Activated naive CD4-positive, alpha-beta T cell treated with anti-CD3 and anti-CD28 coated beads for 36 hours (primary cell): ENCODE measurements at regions of chr15 and their contacts with region 1.

Region 1: GRCh38 chr15:31488426-31489204 is 162.0 kb downstream of the KLF13 start:
- DNase-seq: peak; percentile 57
- H3K4me3 Mint-ChIP-seq: no peak overlapping the region
- H3K27ac Mint-ChIP-seq: no peak overlapping the region
- H3K4me1 Mint-ChIP-seq: peaks cover 23% of the 10 kb centered on the region
- H3K27me3 Mint-ChIP-seq: no peaks in the 10 kb centered on the region

Region 2: GRCh38 chr15:31200735-31201151 is 287.9 kb before region 1 on chr15:
- CTCF ChIA-PET with region 1: interaction called, 37 read pairs
- intact Hi-C with region 1: loop called (anchors 1 kb)
- DNase-seq: peak; percentile 88
- H3K4me3 Mint-ChIP-seq: no peak overlapping the region
- H3K27ac Mint-ChIP-seq: no peak overlapping the region
- H3K4me1 Mint-ChIP-seq: peaks cover 20% of the 10 kb centered on the region
- H3K27me3 Mint-ChIP-seq: no peaks in the 10 kb centered on the region

Region 3: DNA sequence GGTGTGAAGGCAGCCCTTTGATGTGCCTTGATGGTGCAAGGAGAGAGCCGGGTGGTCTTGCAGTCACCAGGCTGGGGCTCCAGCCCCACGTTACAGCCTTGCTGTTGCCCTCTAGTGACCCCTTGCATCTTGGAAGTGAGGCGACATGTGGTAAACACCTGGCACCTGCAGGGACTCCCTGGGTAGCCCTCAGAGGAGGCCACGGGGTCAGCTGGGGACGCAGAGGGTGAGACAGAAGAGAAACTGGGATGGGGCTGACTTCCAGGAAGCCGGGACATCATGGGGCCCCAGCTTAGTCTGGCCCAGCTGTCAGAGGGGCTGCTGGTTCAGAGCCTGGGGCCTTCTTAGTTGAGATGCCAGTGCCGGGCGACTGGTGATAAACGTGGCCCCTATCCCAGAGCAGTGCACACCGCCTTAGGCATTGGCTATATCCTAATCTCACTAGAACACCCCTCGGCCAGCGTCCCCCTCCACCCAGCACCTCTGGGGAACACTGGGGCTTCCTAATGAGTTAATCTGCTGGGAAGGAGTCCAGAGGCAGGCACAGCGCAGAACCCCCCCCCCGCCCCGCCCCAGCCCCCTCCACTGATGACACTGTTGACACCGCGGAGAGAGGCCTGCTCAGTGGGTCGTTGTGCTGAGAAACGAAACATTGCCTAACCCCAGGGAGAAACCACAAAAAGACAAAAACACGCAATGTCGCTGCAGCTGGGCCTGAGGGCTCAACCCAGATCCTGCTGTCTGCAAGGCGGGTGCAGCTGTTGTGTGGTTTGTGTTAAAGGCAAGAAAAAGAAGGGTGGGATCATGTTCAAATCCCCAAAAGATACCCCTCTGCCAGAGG is 222.5 kb before region 1 on chr15:
- CTCF ChIA-PET with region 1: interaction called, 6 read pairs
- intact Hi-C with region 1: loop called (anchors 1 kb)
- DNase-seq: peak; percentile 81
- H3K4me3 Mint-ChIP-seq: no peak overlapping the region
- H3K27ac Mint-ChIP-seq: peak overlapping the region; percentile 67
- H3K4me1 Mint-ChIP-seq: peaks cover 84% of the 10 kb centered on the region
- H3K27me3 Mint-ChIP-seq: no peaks in the 10 kb centered on the region

Region 4: DNA sequence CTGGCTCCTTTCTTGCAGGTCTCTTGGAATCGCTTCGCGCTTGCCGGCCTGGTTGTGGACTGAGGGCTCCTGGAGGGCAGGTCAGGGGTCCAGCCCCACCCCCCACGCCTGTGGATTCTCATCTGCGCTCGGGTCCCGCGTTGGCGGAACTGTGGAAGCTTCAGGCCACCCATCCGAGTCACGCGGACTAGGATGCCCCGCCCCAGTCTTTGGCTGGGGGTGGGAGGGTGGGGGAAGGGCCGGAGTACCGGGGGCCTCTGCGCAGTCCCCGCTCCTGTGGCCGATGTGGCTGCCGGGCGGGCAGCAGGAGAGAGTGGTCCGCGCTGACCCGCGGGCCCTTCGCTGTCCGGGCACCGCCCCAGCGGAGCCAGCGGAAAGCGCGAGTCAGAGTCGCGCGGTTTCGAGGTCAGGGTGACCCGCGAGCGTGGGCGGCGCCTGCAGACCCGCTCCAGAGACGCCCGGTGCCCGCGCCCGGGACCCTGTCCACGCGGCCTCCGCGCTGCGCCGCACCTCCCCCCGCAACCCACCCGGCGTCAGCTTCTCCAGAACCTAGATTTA is 47.8 kb before region 1 on chr15:
- CTCF ChIA-PET with region 1: interaction called, 348 read pairs
- intact Hi-C with region 1: loop called (anchors 1 kb)
- DNase-seq: peak; percentile 40
- H3K4me3 Mint-ChIP-seq: peak overlapping the region; percentile 64
- H3K27ac Mint-ChIP-seq: no peak overlapping the region
- H3K4me1 Mint-ChIP-seq: peaks cover 50% of the 10 kb centered on the region
- H3K27me3 Mint-ChIP-seq: no peaks in the 10 kb centered on the region

Region 5: GRCh38 chr15:31499953-31500765 is 11.5 kb after region 1 on chr15:
- CTCF ChIA-PET with region 1: interaction called, 16 read pairs
- intact Hi-C with region 1: no loop called
- DNase-seq: no peak
- H3K4me3 Mint-ChIP-seq: no peak overlapping the region
- H3K27ac Mint-ChIP-seq: no peak overlapping the region
- H3K4me1 Mint-ChIP-seq: no peaks in the 10 kb centered on the region
- H3K27me3 Mint-ChIP-seq: no peaks in the 10 kb centered on the region

Region 6: DNA sequence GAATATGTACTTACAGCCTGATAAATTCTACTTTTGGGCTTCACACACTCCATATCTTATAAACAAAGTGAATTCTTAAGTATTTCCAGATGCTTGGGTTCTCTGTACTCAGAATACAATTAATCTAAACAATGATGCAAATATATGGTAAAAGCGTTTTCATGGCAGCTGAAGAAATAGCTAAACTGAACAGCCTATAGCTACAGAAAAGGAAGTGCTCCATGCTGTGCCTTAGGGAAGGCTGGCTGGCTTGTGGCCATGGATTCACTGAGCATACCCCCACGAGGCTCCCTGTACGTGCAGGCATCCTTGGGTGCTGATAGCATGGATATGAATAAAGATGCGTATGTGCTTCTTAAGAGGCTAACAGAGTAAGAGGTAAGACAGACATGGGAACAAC is 102.0 kb after region 1 on chr15:
- CTCF ChIA-PET with region 1: no interaction called
- intact Hi-C with region 1: no loop called
- DNase-seq: no peak
- H3K4me3 Mint-ChIP-seq: no peak overlapping the region
- H3K27ac Mint-ChIP-seq: no peak overlapping the region
- H3K4me1 Mint-ChIP-seq: no peaks in the 10 kb centered on the region
- H3K27me3 Mint-ChIP-seq: peaks cover 5% of the 10 kb centered on the region